Astrocyte of the cerebellum (primary cell): ENCODE measurements at regions of chr11 and their contacts with region 1.

Region 1: DNA sequence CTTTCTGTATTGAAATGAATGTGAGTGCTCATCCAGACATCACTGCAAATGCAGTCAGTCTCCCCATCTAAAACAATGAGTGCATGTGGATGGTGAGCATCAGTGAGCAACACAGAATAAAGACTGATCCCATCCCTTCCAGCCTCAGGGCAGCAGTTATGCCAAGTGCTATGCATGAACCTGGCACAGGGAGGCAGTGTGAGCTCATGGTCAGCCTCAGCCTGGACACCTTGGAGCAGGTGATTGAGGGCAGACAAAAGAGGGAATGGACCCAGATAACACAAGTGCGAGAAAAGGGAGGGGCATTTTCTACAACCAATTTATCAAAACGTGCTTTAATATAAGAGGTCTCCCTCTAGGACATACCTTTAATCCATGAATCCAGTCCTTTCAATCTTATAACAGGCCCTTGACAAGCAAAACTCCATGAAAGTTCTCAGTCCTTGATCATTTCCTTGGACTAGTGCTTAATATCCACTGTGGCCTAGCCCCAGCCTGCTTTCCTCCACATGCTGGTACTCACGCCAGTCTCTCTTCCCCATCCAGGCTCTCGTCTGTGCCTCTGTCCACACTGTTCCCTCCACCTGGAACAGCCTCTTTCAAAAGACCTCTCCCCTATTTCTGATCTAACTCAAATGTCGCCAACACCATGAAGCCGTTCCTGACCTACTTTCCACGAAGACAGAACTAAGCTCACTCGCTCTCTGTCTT is 50.5 kb upstream of the LRRC55 start:
- DNase-seq: no peak
- H3K4me3 ChIP-seq: no peak overlapping the region
- CTCF ChIP-seq: peak; percentile 44

Region 2: GRCh38 chr11:56923116-56923515 is 208.1 kb before region 1 on chr11:
- in situ Hi-C with region 1: no loop called
- DNase-seq: no peak
- H3K4me3 ChIP-seq: no peak overlapping the region
- CTCF ChIP-seq: no peak

Region 3: DNA sequence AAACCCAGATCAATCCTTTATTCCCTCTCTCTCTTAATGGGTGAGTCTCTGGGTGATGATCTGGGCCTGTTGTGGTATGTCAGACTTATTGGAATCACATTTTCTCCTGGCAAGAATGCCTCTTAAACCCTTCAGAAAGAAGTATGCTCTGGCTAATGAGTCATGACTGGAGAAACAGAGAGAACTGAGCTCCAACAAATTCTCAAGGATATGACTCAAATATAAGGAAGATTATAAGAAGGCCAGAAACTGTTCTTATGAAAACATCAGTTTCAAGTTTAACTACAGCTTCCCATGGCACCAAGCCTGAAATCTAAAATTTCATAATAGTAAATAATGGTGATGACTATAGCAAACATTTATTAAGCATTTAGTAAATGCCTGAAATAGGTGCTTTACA is 58.6 kb before region 1 on chr11:
- in situ Hi-C with region 1: loop called (anchors 5 kb)
- DNase-seq: peak; percentile 94
- H3K4me3 ChIP-seq: no peak overlapping the region
- CTCF ChIP-seq: no peak

Region 4: GRCh38 chr11:57205041-57205671 is 73.9 kb after region 1 on chr11:
- in situ Hi-C with region 1: no loop called
- DNase-seq: peak; percentile 2
- H3K4me3 ChIP-seq: no peak overlapping the region
- CTCF ChIP-seq: no peak

Region 5: DNA sequence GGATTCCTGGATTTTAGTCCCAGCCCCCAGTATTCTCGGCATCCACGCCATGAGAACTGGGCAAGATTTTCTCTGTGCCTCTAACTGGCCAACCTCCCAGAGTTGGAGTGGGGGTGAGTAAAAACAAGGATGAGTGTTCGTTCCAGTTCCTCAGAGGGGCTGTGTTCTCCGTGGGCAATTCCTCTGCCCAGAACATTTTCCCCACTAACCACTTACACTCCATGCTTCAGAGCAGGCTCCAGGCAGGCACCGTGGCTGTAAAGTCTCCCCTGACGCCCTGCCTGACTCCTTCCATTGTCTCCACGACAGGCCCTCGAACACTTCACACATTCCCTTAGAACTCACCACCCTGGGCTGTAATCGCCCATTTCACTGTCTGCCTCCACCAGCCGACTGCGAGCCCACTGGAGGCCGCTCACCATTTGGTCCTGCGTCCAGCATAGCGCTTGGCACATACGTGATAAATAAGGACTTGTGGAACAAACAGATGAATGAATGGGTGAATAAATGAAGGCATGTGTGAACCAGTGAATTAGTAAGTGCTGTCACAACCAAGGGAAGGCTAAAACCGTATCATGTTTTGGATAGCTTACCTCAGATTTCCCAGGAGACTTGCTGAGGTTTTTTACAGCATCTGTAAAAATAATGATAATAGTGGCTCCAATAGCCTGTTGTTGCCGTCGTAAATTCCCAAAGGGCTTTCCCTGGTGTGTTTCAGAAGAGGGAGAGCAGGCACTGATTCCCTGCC is 99.7 kb after region 1 on chr11:
- in situ Hi-C with region 1: loop called (anchors 5 kb)
- DNase-seq: no peak
- H3K4me3 ChIP-seq: no peak overlapping the region
- CTCF ChIP-seq: no peak

Region 6: GRCh38 chr11:57571606-57572005 is 440.4 kb after region 1 on chr11:
- in situ Hi-C with region 1: no loop called
- DNase-seq: no peak
- H3K4me3 ChIP-seq: no peak overlapping the region
- CTCF ChIP-seq: no peak